ENCODE measurements at regions of chr12 and their contacts with region 1.

Region 1: GRCh38 chr12:6944381-6945186 is 762 bp downstream of the C12orf57 start:
- H3K4me3 ChIP-seq: peak overlapping the region; percentile 61
- H3K27ac ChIP-seq: peak overlapping the region; percentile 87
- H3K4me1 ChIP-seq: peaks cover 14% of the 10 kb centered on the region
- CTCF ChIP-seq: peak; percentile 99

Region 2: GRCh38 chr12:6867413-6868210 is 77.0 kb before region 1 on chr12 and contains the start of gene TPI1:
- CTCF ChIA-PET with region 1: interaction called, 10 read pairs
- POLR2A ChIA-PET with region 1: interaction called, 45 read pairs
- H3K4me3 ChIP-seq: peak within 1 kb of the TSS; percentile 87
- H3K27ac ChIP-seq: peak within 1 kb of the TSS; percentile 98
- H3K4me1 ChIP-seq: peaks cover 7% of the 10 kb centered on the region
- CTCF ChIP-seq: peak; percentile 10; the same call in 1 of the 2 replicates

Region 3: GRCh38 chr12:6965026-6965661 is 20.6 kb after region 1 on chr12:
- CTCF ChIA-PET with region 1: interaction called, 138 read pairs
- POLR2A ChIA-PET with region 1: interaction called, 67 read pairs
- H3K4me3 ChIP-seq: no peak overlapping the region
- H3K27ac ChIP-seq: peak overlapping the region; percentile 1; the same call in 1 of the 2 replicates
- H3K4me1 ChIP-seq: peaks cover 2% of the 10 kb centered on the region; the same call in 1 of the 2 replicates
- CTCF ChIP-seq: peak; percentile 93

Region 4: DNA sequence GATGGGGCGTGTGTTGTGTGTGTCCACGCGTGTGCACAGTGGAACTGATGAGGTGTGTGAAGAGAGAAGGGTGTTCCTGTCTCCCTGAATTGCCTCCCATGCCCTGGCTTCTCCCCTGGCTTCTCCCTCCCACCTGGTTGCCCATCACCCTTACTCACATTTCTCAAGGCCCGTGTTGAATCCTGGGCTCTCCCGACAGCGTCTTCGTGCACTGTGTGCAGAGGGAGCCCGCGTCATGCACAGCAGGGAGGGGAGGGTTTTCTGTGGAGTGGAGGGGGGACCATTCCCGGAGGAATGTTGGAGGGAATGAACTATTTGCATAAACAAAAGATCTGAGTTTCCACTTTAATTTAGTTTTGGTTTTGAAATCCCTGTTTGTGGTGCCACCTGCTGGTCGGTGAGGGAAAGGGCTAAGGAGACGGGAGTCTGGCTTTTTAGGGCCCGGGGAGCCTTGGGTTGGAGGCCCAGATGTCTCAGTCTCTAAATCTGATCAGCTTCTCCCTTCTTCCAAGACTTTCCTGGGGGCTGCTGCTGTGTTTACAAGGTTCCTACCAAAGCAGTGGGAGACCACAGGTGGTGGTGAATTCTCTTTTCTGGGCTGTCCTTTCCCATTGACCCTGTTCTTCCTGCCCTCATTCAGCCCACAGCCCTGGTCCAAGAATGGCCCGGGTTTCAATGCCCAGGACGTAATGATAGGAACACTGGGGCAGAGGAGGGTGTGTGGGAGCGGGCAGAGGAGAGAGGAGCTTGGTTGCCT is 147.8 kb after region 1 on chr12 and contains the start of gene C1R:
- CTCF ChIA-PET with region 1: interaction called, 13 read pairs
- POLR2A ChIA-PET with region 1: interaction called, 4 read pairs
- H3K4me3 ChIP-seq: peak within 1 kb of the TSS; percentile 38
- H3K27ac ChIP-seq: no peak within 1 kb of the TSS
- H3K4me1 ChIP-seq: no peaks in the 10 kb centered on the region
- CTCF ChIP-seq: peak; percentile 74

Region 5: DNA sequence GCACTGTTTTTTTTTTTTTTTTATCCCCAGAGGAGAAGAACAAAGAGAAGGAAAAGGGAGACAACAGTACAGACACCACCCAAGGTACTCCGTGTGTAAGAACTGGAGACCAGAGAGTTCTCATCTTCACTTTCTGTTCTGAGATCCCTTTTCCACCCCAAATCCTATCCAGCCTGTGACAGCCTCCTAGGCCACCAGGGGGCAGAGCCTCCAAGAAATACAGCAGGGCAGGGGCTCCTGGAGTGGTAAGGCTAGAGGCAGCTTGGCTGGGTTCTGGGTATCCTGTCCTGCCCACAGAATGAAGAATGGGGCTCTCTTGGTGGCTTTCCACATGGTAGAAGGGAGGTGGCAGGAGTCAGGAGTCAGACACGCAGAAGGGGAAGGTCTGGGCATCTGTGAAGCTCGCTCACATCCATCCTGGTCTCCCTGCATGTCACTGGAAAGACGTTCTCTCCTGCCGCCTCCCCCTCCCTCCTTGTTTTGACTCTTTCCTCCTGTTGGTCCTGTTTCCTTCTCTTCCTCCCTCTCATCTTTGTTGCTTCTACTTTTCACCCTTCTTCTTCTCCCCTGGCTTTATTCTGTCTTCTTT is 197.6 kb after region 1 on chr12:
- CTCF ChIA-PET with region 1: interaction called, 17 read pairs
- POLR2A ChIA-PET with region 1: no interaction called
- H3K4me3 ChIP-seq: no peak overlapping the region
- H3K27ac ChIP-seq: no peak overlapping the region
- H3K4me1 ChIP-seq: no peaks in the 10 kb centered on the region
- CTCF ChIP-seq: no peak; the same call in 1 of the 2 replicates